ENCODE measurements at regions of chr3 and their contacts with region 1.

Region 1: DNA sequence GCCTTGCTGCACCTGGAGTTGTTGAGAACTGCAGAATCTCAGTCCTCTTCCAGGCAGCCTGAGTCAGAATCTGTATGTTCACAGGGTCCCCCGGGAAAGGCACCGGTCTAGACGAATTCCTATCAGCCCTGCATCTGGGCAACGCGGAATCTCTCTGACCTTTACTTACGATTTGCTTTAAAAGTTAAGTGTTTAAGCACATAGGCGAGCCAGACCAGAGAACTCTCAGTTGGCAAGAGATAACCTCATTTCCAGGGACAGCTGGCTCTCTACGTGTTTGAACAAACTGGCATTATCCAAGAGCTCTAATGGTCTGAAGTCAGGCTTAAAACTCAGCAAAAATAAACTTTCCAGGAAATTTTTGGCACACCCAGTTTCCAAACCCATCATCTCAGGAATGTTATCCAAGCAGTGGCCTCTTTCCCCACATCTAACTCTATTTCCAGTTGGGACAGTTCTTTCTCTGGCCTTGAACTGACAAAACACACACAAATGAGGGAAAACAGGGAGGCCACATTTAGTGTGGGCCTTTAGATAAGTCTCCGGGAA is 53.4 kb downstream of the HES1 start:
- DNase-seq: peak in 2 of 5 donors; percentile 48 to 53
- H3K4me3 ChIP-seq: no peak overlapping the region
- H3K27ac ChIP-seq: no peak overlapping the region
- H3K4me1 ChIP-seq: peaks cover 10% of the 10 kb centered on the region
- H3K27me3 ChIP-seq: no peaks in the 10 kb centered on the region
- CTCF ChIP-seq: no peak
- EP300 ChIP-seq: no peak
- POLR2A ChIP-seq: no peak

Region 2: GRCh38 chr3:194141415-194142155 is 47.7 kb before region 1 on chr3:
- intact Hi-C with region 1: loop called in 1 of 4 experiments (anchors 5 kb)
- DNase-seq: peak; percentile 90 to 93 (median 93)
- H3K4me3 ChIP-seq: peak overlapping the region; percentile 33
- H3K27ac ChIP-seq: peak overlapping the region; percentile 80 to 96
- H3K4me1 ChIP-seq: peaks cover 14% of the 10 kb centered on the region
- H3K27me3 ChIP-seq: no peaks in the 10 kb centered on the region
- CTCF ChIP-seq: no peak
- EP300 ChIP-seq: no peak
- POLR2A ChIP-seq: no peak

Region 3: DNA sequence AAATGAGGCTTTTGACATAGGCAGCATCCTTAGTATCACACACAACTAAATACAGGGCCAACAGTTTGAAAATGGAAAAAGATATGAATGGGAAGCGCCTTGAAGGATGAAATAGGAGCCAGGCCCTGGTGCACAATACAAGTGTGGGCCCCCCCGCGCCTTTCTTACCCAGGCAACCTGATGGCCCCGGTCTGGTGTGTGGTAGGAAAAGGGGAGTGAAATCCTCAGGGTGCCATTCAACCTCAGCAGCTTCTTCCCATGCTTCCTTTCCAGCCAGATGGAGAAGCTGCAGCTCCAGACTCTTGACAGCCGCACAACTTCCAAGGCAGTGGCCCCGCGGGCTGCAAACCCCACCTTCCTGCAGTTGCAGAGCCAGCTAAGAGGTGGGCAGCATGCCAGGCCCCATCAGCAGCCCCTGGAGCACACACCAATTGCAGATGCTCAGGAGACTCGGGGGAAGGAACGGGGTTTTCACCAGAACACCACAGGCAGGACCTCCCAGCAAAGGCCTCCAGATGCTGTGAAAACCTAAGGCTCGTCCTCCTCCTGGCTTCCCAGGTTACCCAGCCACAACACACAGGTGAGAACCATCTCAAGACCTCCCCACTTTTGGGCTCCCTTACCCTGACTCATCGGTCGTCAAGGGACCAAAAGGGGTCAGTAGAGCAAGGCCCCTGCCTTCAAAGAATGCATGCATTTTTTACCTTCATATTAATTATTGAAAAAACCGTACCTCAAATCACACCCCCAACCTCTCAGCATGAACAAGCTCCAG is 60.2 kb after region 1 on chr3:
- intact Hi-C with region 1: loop called in 1 of 4 experiments (anchors 10 kb)
- DNase-seq: peak in 3 of 5 donors; percentile 59 to 75 (median 69)
- H3K4me3 ChIP-seq: no peak overlapping the region
- H3K27ac ChIP-seq: no peak overlapping the region
- H3K4me1 ChIP-seq: peaks cover 19% of the 10 kb centered on the region
- H3K27me3 ChIP-seq: no peaks in the 10 kb centered on the region
- CTCF ChIP-seq: no peak
- EP300 ChIP-seq: no peak
- POLR2A ChIP-seq: no peak

Measured in ovary (tissue), 10 donors.